Activated CD8-positive, alpha-beta T cell treated with anti-CD3 and anti-CD28 coated beads for 36 hours (primary cell): ENCODE measurements at regions of chr6 and their contacts with region 1.

Region 1: DNA sequence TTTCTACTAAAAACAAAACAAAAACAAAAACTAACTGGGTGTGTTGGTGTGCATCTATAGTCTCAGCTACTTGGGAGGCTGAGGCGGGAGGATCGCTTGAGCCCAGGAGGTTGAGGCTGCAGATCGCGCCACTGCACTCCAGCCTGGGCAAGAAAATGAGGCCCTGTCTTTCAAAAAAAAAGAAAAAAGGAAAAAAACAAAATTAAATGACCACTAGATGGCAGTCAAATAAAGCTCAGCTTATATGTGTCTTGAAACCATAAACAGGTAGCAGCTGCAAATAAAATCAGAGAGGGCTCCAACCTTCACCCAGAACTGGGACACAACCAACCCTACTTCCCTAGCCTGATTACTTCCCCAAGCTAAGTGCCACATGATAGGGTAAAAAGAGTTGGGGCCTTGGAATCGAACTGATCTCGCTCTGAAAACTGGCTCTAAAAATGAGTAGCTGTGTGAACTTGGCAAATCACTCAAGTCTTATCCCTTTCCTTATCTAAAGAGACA is 67.1 kb upstream of the ADGRF4 start:
- DNase-seq: peak; percentile 19
- ATAC-seq: peak; percentile 64
- H3K4me3 Mint-ChIP-seq: no peak overlapping the region
- H3K27ac Mint-ChIP-seq: no peak overlapping the region
- H3K4me1 Mint-ChIP-seq: peaks cover 14% of the 10 kb centered on the region
- H3K27me3 Mint-ChIP-seq: no peaks in the 10 kb centered on the region
- CTCF ChIP-seq: peak; percentile 67

Region 2: GRCh38 chr6:47413752-47414422 is 217.4 kb before region 1 on chr6:
- CTCF ChIA-PET with region 1: interaction called, 14 read pairs
- POLR2A ChIA-PET with region 1: no interaction called
- intact Hi-C with region 1: loop called (anchors 2 kb)
- DNase-seq: peak; percentile 46
- ATAC-seq: peak; percentile 85
- H3K4me3 Mint-ChIP-seq: peak overlapping the region; percentile 69
- H3K27ac Mint-ChIP-seq: peak overlapping the region; percentile 69
- H3K4me1 Mint-ChIP-seq: peaks cover 15% of the 10 kb centered on the region
- H3K27me3 Mint-ChIP-seq: no peaks in the 10 kb centered on the region
- CTCF ChIP-seq: peak; percentile 79

Region 3: GRCh38 chr6:47727391-47727790 is 96.1 kb after region 1 on chr6:
- CTCF ChIA-PET with region 1: interaction called, 11 read pairs
- POLR2A ChIA-PET with region 1: no interaction called
- intact Hi-C with region 1: no loop called
- DNase-seq: no peak
- ATAC-seq: no peak
- H3K4me3 Mint-ChIP-seq: no peak overlapping the region
- H3K27ac Mint-ChIP-seq: no peak overlapping the region
- H3K4me1 Mint-ChIP-seq: peaks cover 12% of the 10 kb centered on the region
- H3K27me3 Mint-ChIP-seq: no peaks in the 10 kb centered on the region
- CTCF ChIP-seq: no peak

Region 4: GRCh38 chr6:47752801-47753200 is 121.5 kb after region 1 on chr6:
- CTCF ChIA-PET with region 1: interaction called, 11 read pairs
- POLR2A ChIA-PET with region 1: no interaction called
- intact Hi-C with region 1: no loop called
- DNase-seq: no peak
- ATAC-seq: no peak
- H3K4me3 Mint-ChIP-seq: no peak overlapping the region
- H3K27ac Mint-ChIP-seq: no peak overlapping the region
- H3K4me1 Mint-ChIP-seq: peaks cover 6% of the 10 kb centered on the region
- H3K27me3 Mint-ChIP-seq: peaks cover 8% of the 10 kb centered on the region
- CTCF ChIP-seq: no peak

Region 5: DNA sequence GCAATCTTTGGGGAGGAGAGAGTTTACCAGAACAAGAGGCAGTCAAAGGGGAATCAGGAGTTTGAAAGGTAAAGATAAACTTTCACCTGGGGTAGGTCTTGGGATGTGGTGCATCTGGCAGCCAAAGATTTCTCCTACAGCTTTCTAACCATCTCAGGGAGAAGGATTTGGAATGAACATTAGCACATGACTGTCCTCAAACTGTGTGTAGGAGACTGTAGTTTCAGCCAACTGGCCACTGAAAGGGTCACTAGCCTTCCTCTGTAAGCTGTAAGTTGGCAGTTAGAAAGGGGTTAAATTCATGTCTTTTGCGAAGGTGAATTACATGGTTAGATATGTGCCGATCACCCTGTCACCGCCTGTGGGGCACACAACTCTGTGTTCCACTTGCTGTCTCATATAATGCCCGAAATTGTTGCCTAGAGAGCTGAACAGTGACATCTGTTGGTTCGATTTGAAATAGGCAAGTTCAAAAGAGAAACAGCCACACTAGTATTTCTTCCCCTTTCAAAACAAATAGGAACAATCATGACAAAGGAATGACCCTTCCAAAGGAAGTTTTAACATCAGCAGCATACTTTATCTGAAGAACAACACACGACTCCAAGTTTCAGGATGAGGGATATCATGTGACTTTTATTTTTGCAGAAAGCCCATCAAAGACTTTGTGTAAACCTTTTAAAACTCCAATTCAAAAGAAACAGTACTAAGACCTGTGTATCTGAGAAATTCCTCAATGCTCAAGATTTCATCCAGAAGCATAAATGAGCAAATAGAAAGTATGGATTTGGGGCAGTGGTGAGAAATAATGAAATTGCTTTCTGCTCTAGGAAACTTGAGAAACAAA is 149.4 kb after region 1 on chr6:
- CTCF ChIA-PET with region 1: interaction called, 103 read pairs
- POLR2A ChIA-PET with region 1: no interaction called
- intact Hi-C with region 1: loop called (anchors 1 kb)
- DNase-seq: peak; percentile 56
- ATAC-seq: peak; percentile 97
- H3K4me3 Mint-ChIP-seq: no peak overlapping the region
- H3K27ac Mint-ChIP-seq: no peak overlapping the region
- H3K4me1 Mint-ChIP-seq: peaks cover 5% of the 10 kb centered on the region
- H3K27me3 Mint-ChIP-seq: peaks cover 11% of the 10 kb centered on the region
- CTCF ChIP-seq: peak; percentile 56